ENCODE measurements at regions of chr19 and their contacts with region 1.

Region 1: GRCh38 chr19:39125554-39126311 is at the start of gene PAK4:
- DNase-seq: peak in 1 of 2 donors; percentile 97
- H3K4me3 ChIP-seq: peak within 1 kb of the TSS; percentile 86 to 91
- H3K27ac ChIP-seq: peak within 1 kb of the TSS; percentile 89
- H3K4me1 ChIP-seq: peaks cover 49% of the 10 kb centered on the region
- H3K27me3 ChIP-seq: no peaks in the 10 kb centered on the region
- CTCF ChIP-seq: peak in 1 of 3 experiments; percentile 13
- POLR2A ChIP-seq: no peak
- total RNA-seq, gene PAK4: 19.4 TPM

Region 2: DNA sequence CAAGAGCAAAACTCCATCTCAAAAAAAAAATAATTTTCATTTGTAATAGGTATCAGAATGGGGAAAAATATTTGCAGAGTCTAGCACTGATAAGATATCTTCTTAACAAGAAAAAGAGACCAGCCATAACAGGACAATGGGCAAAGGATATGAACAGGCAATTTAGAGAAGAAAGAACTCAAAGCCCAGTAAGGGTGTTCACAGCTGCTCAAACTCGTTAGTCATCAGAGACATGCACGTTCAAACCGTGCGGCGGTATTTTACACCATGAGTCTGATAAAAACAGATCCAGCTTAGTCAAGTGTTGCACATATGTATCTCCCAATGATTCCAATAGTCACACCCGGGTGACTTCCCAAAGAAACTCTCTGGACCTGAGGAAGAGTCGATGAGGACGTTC is 57.4 kb after region 1 on chr19:
- intact Hi-C with region 1: loop called (anchors 5 kb)
- DNase-seq: no peak
- H3K4me3 ChIP-seq: no peak overlapping the region
- H3K27ac ChIP-seq: no peak overlapping the region
- H3K4me1 ChIP-seq: no peaks in the 10 kb centered on the region
- H3K27me3 ChIP-seq: no peaks in the 10 kb centered on the region
- CTCF ChIP-seq: no peak
- POLR2A ChIP-seq: no peak

Region 3: DNA sequence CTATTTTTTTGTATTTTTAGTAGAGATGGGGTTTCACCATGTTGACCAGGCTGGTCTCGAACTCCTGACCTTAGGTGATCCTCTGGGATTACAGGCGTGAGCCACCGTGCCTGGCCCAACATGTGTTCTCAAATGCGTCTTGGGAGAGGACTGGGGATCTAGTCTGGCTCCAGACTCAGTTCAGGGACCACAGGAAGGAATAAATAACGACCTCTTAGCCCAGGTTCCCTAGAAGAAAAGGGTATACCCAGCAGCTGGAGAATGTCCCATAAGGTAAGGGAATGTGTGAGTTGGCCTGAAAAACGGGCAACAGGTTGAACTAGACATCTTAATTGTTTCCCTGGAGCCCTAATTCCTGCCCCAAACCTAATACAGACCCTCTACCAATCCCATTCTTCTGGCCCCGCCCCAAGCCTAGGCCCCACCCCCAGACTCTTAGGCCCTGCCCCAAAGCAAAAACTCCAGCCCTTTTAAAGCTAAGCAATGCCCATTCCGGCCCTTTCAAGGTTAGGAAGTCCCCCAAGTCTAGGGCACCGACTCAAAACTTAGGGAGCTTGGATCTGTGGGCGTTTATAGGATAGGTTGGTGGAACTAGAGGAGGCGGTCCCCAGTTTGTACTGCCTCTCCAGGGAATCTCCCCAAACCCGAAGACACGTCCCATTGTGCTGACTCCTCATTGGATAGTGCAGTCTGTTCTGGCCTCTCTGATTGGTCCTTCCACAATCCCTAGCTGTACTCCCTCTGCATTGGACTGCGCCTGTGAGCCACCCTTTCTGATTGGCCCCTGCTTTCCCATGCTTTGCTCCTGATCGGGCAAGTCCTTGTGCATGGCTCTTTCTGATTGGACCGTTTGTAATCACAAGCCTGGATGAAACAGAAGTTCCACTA is 200.3 kb after region 1 on chr19:
- intact Hi-C with region 1: loop called (anchors 2 kb)
- DNase-seq: no peak
- H3K4me3 ChIP-seq: no peak overlapping the region
- H3K27ac ChIP-seq: no peak overlapping the region
- H3K4me1 ChIP-seq: peaks cover 4% of the 10 kb centered on the region
- H3K27me3 ChIP-seq: no peaks in the 10 kb centered on the region
- CTCF ChIP-seq: no peak
- POLR2A ChIP-seq: no peak

Region 4: GRCh38 chr19:39474139-39474622 is 348.4 kb after region 1 on chr19:
- intact Hi-C with region 1: loop called (anchors 10 kb)
- DNase-seq: no peak
- H3K4me3 ChIP-seq: no peak overlapping the region
- H3K27ac ChIP-seq: no peak overlapping the region
- H3K4me1 ChIP-seq: no peaks in the 10 kb centered on the region
- H3K27me3 ChIP-seq: no peaks in the 10 kb centered on the region
- CTCF ChIP-seq: peak; percentile 37 to 56 (median 54)
- POLR2A ChIP-seq: no peak

Measured in vagina (tissue), 2 donors.